Esophagus squamous epithelium (tissue), 5 donors: ENCODE measurements at regions of chr6 and their contacts with region 1.

Region 1: GRCh38 chr6:127539272-127539671 is 20.1 kb upstream of the MTCL3 start:
- DNase-seq: no peak
- H3K4me3 ChIP-seq: no peak overlapping the region
- H3K27ac ChIP-seq: no peak overlapping the region
- H3K4me1 ChIP-seq: no peaks in the 10 kb centered on the region
- H3K27me3 ChIP-seq: peaks cover 0 to 4% (median 0%) of the 10 kb centered on the region in 4 donors
- CTCF ChIP-seq: peak in 4 of 6 experiments; percentile 25 to 53 (median 40)
- POLR2A ChIP-seq: no peak

Region 2: GRCh38 chr6:127464881-127465459 is 74.3 kb before region 1 on chr6:
- intact Hi-C with region 1: loop called (anchors 5 kb)
- DNase-seq: no peak
- H3K4me3 ChIP-seq: no peak overlapping the region
- H3K27ac ChIP-seq: peak overlapping the region in 3 of 4 donors; percentile 51 to 74 (median 56)
- H3K4me1 ChIP-seq: peaks cover 0 to 17% (median 0%) of the 10 kb centered on the region in 3 donors
- H3K27me3 ChIP-seq: no peaks in the 10 kb centered on the region
- CTCF ChIP-seq: peak; percentile 31 to 76 (median 68)
- POLR2A ChIP-seq: no peak

Region 3: GRCh38 chr6:127641905-127642304 is 102.6 kb after region 1 on chr6:
- intact Hi-C with region 1: no loop called
- DNase-seq: no peak
- H3K4me3 ChIP-seq: no peak overlapping the region
- H3K27ac ChIP-seq: no peak overlapping the region
- H3K4me1 ChIP-seq: no peaks in the 10 kb centered on the region
- H3K27me3 ChIP-seq: peaks cover 0 to 10% (median 0%) of the 10 kb centered on the region in 4 donors
- CTCF ChIP-seq: peak in 5 of 6 experiments; percentile 40 to 62 (median 45)
- POLR2A ChIP-seq: no peak